HAP-1 (cell line): ENCODE measurements at regions of chr2 and their contacts with region 1.

Region 1: GRCh38 chr2:152755029-152755428 is 36.6 kb downstream of the ARL6IP6 start:
- DNase-seq: peak in 1 of 2 experiments; percentile 22
- H3K4me3 ChIP-seq: no peak overlapping the region
- H3K4me1 ChIP-seq: no peaks in the 10 kb centered on the region
- H3K27me3 ChIP-seq: no peaks in the 10 kb centered on the region

Region 2: DNA sequence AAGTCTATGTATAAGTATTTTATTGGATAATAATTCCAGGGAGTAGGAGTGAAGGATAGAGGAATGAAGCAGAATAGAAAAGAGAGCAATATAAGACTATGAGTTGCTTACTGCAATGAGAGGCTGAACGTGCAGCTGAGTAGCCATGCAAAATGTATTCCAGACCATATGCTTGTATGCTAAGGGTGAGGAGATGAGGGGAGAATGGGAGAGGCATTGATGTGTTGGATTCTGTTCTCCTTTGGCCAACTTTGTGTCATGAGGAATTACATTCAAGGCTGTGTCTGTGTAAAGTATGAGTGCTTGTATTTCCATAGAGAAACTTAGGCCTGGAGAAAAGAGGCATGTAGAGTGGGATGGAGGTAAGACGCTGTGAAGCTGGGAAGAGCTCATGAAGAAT is 265.2 kb after region 1 on chr2:
- in situ Hi-C with region 1: no loop called
- DNase-seq: no peak
- H3K4me3 ChIP-seq: no peak overlapping the region
- H3K4me1 ChIP-seq: no peaks in the 10 kb centered on the region
- H3K27me3 ChIP-seq: no peaks in the 10 kb centered on the region

Region 3: GRCh38 chr2:153519257-153519875 is 764.3 kb after region 1 on chr2:
- in situ Hi-C with region 1: loop called (anchors 25 kb)
- DNase-seq: peak; percentile 63 to 81
- H3K4me3 ChIP-seq: no peak overlapping the region
- H3K4me1 ChIP-seq: no peaks in the 10 kb centered on the region
- H3K27me3 ChIP-seq: peaks cover 4% of the 10 kb centered on the region; the same call in 1 of the 2 replicates